ENCODE measurements at regions of chr6 and their contacts with region 1.

Region 1: DNA sequence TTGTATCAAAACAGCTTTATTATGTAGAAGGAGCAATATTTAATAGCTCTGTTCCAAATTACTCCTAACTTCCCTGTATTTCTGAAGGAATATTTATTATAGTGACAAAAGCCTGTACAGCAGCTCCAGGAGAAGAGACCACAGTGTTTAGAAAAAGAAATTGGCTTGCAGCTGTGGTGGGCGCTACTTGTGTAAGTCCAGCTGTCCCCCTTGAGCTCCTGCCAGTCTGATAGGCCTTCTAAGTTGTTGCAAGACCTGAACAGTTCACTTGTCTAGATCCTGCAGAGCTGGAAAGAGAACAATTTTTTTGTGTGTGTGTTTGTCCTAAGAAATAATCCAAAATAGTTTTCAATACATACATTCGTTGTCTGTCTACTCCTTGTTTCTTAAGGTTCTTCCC is 86.6 kb downstream of the JARID2 start:
- DNase-seq: no peak
- H3K4me3 ChIP-seq: no peak overlapping the region
- H3K27ac ChIP-seq: no peak overlapping the region
- H3K4me1 ChIP-seq: no peaks in the 10 kb centered on the region
- H3K27me3 ChIP-seq: no peaks in the 10 kb centered on the region
- CTCF ChIP-seq: no peak
- POLR2A ChIP-seq: no peak

Region 2: GRCh38 chr6:15322184-15322583 is 10.3 kb before region 1 on chr6:
- CTCF ChIA-PET with region 1: interaction called, 3 read pairs
- POLR2A ChIA-PET with region 1: interaction called, 10 read pairs
- dilution Hi-C with region 1: no loop called
- intact Hi-C with region 1: no loop called
- DNase-seq: no peak
- H3K4me3 ChIP-seq: no peak overlapping the region
- H3K27ac ChIP-seq: no peak overlapping the region
- H3K4me1 ChIP-seq: peaks cover 4% of the 10 kb centered on the region
- H3K27me3 ChIP-seq: no peaks in the 10 kb centered on the region
- CTCF ChIP-seq: no peak
- POLR2A ChIP-seq: no peak

Measured in endothelial cell of umbilical vein (primary cell).